Dendritic cell treated with granulocyte-macrophage colony-stimulating factor and Interleukin-4, amounts not matched to agents 40 ng/mL and 50 ng/mL, for 4 days (primary cell): ENCODE measurements at regions of chr7 and their contacts with region 1.

Region 1: GRCh38 chr7:77600952-77601351 is 63.9 kb downstream of the PTPN12 start:
- H3K4me3 Mint-ChIP-seq: no peak overlapping the region
- H3K27ac Mint-ChIP-seq: no peak overlapping the region
- H3K4me1 Mint-ChIP-seq: peaks cover 1% of the 10 kb centered on the region
- H3K27me3 Mint-ChIP-seq: no peaks in the 10 kb centered on the region

Region 2: DNA sequence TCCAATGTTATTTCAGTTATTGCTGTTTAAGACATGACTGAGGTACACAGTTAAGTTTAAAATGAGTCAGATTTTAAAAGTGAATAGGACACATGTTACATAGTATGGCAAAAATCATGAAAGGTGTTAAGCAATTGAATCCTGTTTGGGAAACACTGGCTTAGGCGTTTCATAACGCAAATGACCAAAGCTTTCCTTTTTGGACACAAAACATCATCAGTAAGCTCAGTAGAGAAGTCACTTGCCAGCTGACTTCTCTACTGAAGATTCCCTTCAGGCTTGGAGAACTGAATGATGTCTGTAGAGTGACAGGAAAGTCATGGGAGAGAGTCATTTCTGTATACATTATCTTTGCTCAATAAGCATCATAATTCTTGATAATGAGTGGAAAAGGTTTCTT is 30.9 kb after region 1 on chr7:
- intact Hi-C with region 1: loop called (anchors 5 kb)
- H3K4me3 Mint-ChIP-seq: no peak overlapping the region
- H3K27ac Mint-ChIP-seq: no peak overlapping the region
- H3K4me1 Mint-ChIP-seq: no peaks in the 10 kb centered on the region
- H3K27me3 Mint-ChIP-seq: no peaks in the 10 kb centered on the region

Region 3: DNA sequence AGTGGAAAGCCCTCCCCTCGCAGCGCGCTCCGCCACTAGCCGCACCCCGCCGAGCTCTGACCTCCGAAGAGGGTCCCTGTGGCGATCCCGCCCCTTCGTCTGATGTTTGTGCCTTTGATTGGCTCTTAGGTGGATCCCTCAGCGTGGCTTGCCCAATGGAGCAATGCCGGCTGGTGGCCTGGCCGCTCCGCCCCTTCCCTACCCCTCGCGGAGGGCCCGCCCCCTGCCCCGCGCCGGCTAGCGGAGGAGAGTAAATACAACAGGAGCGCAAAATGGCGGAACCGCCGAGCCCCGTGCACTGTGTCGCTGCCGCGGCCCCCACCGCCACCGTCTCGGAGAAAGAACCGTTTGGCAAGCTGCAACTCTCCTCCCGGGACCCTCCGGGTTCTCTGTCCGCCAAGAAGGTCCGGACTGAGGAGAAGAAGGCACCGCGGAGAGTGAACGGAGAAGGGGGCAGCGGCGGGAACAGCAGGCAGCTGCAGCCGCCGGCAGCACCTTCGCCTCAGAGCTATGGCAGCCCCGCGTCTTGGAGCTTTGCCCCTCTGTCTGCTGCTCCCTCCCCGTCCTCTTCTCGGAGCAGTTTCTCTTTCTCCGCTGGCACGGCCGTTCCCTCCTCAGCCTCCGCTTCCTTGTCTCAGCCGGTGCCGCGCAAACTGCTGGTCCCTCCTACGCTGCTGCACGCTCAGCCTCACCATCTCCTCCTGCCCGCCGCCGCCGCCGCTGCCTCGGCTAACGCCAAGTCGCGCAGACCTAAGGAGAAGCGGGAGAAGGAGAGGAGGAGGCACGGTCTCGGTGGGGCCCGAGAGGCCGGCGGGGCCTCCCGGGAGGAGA is 95.5 kb after region 1 on chr7 and contains the start of gene RSBN1L:
- intact Hi-C with region 1: no loop called
- H3K4me3 Mint-ChIP-seq: peak within 1 kb of the TSS; percentile 100
- H3K27ac Mint-ChIP-seq: peak within 1 kb of the TSS; percentile 100
- H3K4me1 Mint-ChIP-seq: peaks cover 35% of the 10 kb centered on the region
- H3K27me3 Mint-ChIP-seq: no peaks in the 10 kb centered on the region